ENCODE measurements at regions of chr15 and their contacts with region 1.

Region 1: GRCh38 chr15:38084289-38084688 is 149.8 kb downstream of the TMCO5A start:
- DNase-seq: no peak
- ATAC-seq: peak in 4 of 8 donors; percentile 44 to 57 (median 51)
- H3K4me3 ChIP-seq: no peak overlapping the region
- H3K27ac ChIP-seq: peak overlapping the region in 2 of 10 donors; percentile 42 to 49
- H3K4me1 ChIP-seq: peaks cover 0 to 55% (median 9%) of the 10 kb centered on the region in 9 donors
- H3K27me3 ChIP-seq: no peaks in the 10 kb centered on the region
- CTCF ChIP-seq: no peak

Region 2: DNA sequence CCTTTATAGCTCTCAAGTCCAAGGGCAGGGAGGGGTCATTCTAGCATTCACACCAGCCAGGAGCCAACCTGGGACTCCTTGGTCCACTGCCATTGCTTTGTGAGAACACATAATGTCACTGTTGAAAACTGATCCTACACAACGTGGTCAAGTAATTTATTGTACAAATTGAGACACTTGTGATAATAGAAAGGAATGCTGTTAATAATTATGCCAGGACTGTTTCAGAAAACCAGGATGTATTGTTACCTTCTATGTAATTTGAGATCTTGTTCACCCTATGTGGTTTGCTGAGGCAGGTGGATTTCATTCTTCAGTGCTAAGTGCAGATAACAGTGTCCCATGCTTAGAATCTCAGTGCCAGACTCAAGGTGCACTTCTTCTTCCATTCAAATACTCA is 116.5 kb before region 1 on chr15:
- intact Hi-C with region 1: no loop called
- DNase-seq: no peak
- ATAC-seq: no peak
- H3K4me3 ChIP-seq: no peak overlapping the region
- H3K27ac ChIP-seq: no peak overlapping the region
- H3K4me1 ChIP-seq: no peaks in the 10 kb centered on the region
- H3K27me3 ChIP-seq: no peaks in the 10 kb centered on the region
- CTCF ChIP-seq: no peak

Region 3: DNA sequence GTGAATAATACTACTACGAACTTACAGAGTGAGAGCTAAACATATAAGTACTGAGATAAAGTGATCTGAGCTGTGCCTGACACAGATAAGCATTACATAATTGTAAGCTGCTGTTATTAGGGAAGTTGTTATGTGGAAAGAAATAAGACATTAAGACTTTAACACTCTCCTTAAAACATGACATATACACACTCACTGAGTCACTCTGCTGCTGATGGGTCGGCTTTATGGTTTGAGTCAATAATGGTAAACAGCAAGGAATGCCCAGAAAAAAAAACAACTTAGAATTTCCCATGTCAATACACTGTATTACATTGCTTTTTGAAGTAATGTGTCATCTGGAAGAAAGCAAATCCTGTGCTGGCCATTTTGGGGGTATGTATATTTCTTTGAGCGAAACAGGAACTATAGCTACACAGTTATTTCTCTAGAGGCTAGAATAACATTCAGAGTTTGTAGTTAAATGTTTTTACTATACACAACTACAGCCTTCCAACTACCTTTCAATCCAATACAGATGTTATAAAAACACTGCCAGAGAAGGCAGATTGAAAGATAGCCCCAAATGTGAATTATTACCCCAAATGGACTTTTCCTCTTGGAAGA is 145.5 kb after region 1 on chr15:
- intact Hi-C with region 1: loop called in 1 of 10 experiments (anchors 10 kb)
- DNase-seq: no peak
- ATAC-seq: no peak
- H3K4me3 ChIP-seq: no peak overlapping the region
- H3K27ac ChIP-seq: no peak overlapping the region
- H3K4me1 ChIP-seq: peaks cover 0 to 28% (median 0%) of the 10 kb centered on the region in 9 donors
- H3K27me3 ChIP-seq: no peaks in the 10 kb centered on the region
- CTCF ChIP-seq: no peak

Region 4: GRCh38 chr15:38486936-38487335 is 402.6 kb after region 1 on chr15:
- intact Hi-C with region 1: no loop called
- DNase-seq: no peak
- ATAC-seq: no peak
- H3K4me3 ChIP-seq: no peak overlapping the region
- H3K27ac ChIP-seq: no peak overlapping the region
- H3K4me1 ChIP-seq: no peaks in the 10 kb centered on the region
- H3K27me3 ChIP-seq: no peaks in the 10 kb centered on the region
- CTCF ChIP-seq: no peak